Activated CD4-positive, alpha-beta memory T cell treated with anti-CD3 and anti-CD28 coated beads for 36 hours (primary cell): ENCODE measurements at regions of chr2 and their contacts with region 1.

Region 1: DNA sequence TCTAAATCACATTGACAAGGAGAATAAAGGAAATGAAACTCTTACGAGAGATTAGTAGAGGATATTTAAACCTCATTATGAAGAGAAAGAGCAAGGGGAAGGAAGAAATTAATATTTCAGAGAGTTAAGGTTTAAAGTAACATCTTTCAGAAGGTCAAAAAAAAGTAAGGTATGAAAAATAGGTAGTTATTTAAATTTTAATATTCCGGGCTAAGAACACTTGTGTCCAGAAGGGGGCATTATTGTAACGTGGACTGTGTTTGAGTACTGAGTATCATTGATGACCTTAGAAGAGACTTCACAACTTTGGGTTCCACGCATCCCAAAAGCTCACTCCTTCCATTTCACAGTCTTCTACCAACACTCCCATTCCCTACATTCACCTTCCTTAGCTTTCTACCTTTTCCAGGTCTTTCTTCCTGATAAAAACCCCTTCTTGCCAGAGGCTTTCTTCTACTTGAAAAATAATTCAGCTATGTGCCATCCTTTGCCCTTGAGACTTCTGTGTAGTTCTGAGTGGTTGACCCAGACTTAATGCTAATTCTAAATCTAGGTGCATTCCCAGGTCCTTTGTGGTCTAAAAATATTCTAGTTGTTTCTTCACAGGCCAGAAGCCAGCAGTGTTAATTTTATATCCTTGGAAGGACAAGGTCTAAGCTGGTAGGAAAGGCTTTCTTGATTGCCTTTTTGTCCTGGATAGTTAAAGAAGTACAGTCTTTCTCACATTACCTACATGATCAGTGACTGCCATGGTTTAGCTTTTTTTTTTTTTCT is 16.5 kb downstream of the DYNC1I2 start:
- DNase-seq: no peak
- H3K4me3 Mint-ChIP-seq: no peak overlapping the region
- H3K27ac Mint-ChIP-seq: no peak overlapping the region
- H3K4me1 Mint-ChIP-seq: peaks cover 7% of the 10 kb centered on the region
- H3K27me3 Mint-ChIP-seq: no peaks in the 10 kb centered on the region

Region 2: GRCh38 chr2:171390941-171391516 is 312.7 kb before region 1 on chr2:
- CTCF ChIA-PET with region 1: no interaction called
- POLR2A ChIA-PET with region 1: no interaction called
- intact Hi-C with region 1: no loop called
- DNase-seq: peak; percentile 59
- H3K4me3 Mint-ChIP-seq: no peak overlapping the region
- H3K27ac Mint-ChIP-seq: no peak overlapping the region
- H3K4me1 Mint-ChIP-seq: peaks cover 22% of the 10 kb centered on the region
- H3K27me3 Mint-ChIP-seq: no peaks in the 10 kb centered on the region

Region 3: DNA sequence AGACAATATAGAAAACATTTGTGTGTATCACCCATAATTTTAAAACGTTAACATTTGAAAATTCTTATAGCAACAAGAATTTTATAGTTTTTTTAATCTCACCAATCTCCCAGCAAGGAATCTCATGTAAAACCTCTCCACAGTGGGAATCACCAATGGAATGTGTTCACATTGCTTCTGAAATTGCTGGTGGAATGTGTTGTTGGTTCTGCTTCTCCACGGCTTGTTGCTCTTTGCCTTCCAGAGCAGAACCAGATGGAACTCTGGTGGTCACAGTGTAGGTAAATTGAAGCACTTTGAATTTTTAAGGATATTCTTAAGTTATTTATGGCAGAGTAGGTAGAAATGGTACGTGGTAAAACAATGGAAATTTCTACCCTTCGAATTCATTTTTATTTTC is 234.6 kb before region 1 on chr2:
- CTCF ChIA-PET with region 1: no interaction called
- POLR2A ChIA-PET with region 1: no interaction called
- intact Hi-C with region 1: no loop called
- DNase-seq: no peak
- H3K4me3 Mint-ChIP-seq: no peak overlapping the region
- H3K27ac Mint-ChIP-seq: no peak overlapping the region
- H3K4me1 Mint-ChIP-seq: no peaks in the 10 kb centered on the region
- H3K27me3 Mint-ChIP-seq: no peaks in the 10 kb centered on the region

Region 4: GRCh38 chr2:171574149-171574795 is 129.5 kb before region 1 on chr2:
- CTCF ChIA-PET with region 1: interaction called, 6 read pairs
- POLR2A ChIA-PET with region 1: no interaction called
- intact Hi-C with region 1: loop called (anchors 5 kb)
- DNase-seq: peak; percentile 90
- H3K4me3 Mint-ChIP-seq: no peak overlapping the region
- H3K27ac Mint-ChIP-seq: no peak overlapping the region
- H3K4me1 Mint-ChIP-seq: peaks cover 7% of the 10 kb centered on the region
- H3K27me3 Mint-ChIP-seq: peaks cover 2% of the 10 kb centered on the region

Region 5: DNA sequence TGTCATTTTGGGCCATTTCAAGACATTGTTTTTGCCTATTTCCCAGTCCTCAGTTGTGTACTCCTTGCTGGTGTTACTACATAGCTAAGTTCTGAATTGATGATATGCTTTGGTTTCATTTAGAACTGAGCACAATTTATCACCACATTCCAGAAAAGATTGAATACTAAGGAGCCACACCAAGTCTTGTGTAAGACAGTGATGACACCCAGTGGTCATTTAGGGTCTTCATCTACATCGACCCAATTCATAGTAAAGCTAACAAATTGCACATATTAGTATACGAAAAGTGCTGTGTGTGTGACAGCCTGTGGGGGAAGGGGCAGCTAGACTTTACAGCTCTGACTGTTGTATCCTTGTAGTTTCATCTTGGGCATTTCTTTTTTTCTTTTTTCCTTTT is 409.9 kb after region 1 on chr2:
- CTCF ChIA-PET with region 1: interaction called, 14 read pairs
- POLR2A ChIA-PET with region 1: no interaction called
- intact Hi-C with region 1: no loop called
- DNase-seq: no peak
- H3K4me3 Mint-ChIP-seq: no peak overlapping the region
- H3K27ac Mint-ChIP-seq: no peak overlapping the region
- H3K4me1 Mint-ChIP-seq: no peaks in the 10 kb centered on the region
- H3K27me3 Mint-ChIP-seq: peaks cover 25% of the 10 kb centered on the region

Region 6: DNA sequence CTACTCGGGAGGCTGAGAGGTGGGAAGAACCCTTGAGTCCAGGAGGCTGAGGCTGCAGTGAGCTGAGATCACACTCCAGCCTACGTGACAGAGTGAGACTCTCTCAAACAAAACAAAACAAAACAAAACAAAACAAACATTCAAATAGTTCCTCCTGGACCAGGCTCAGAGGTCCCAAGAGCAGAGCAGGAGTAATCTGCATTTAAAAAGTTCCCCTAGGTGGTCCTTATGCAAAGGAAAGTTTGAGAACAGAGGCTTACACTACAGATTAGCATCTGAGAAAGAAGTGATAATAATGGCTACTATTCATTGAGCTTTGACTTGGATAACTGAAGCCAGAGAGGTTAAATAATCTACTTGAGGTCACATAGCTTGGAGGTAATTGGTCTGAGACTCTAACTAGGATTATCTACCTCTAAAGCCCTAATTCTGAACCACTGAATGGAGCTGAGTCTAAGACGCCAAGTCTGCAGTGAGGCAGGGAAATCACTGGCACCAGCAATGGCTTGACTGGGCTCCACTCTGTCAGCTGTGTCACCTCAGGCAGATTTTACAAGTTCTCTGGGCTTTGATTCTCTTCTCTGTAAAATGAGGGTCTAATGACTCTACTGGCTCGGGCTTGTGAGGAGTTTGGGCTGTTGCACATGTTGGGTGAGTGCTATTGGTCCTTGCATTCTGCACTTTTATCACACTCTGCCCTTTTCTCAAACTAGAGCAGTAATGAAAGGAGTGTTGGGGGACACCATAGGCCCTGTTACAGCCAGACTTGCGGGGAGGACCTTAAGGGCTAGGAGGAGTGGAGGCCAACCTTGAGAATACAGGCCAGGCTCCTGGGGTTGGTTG is 428.2 kb after region 1 on chr2:
- CTCF ChIA-PET with region 1: interaction called, 23 read pairs
- POLR2A ChIA-PET with region 1: no interaction called
- intact Hi-C with region 1: no loop called
- DNase-seq: no peak
- H3K4me3 Mint-ChIP-seq: no peak overlapping the region
- H3K27ac Mint-ChIP-seq: no peak overlapping the region
- H3K4me1 Mint-ChIP-seq: no peaks in the 10 kb centered on the region
- H3K27me3 Mint-ChIP-seq: peaks cover 8% of the 10 kb centered on the region